Panc1 (cell line): ENCODE measurements at regions of chr16 and their contacts with region 1.

Region 1: DNA sequence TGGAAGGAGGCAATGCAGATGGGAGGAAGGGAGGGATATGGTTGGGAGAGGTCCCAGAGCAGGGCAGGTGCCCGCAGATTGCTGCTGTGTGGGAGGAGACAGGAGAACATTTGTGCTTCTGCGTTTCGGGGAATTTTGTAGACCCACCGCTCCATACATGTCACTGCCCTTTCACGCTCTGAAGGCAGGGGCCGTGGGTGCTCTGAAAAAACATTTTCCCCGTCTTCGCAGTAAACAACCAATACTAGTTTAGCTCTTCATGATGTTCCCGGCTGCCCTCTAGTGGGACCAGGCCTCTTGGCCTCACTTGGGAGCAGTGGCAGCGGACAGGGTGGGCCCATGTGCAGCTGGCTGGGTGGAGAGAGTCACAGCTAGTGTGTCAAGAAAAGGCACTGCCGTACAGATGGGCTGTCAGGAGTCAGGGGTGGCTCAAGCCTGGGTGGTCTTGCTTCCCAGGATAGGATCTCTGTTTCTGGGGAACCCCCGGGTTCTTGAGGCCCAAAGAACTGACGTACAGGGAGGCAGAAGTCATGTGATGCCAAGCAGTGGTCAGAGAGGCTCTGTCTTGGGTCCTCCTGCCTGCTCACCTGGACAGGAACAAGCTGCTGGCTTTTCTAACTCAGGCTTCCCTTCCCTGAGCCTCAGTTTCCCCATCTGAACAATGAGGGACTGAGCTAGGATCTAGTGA is 46.5 kb upstream of the CPNE2 start:
- DNase-seq: peak; percentile 13
- ATAC-seq: peak; percentile 84
- H3K4me3 ChIP-seq: no peak overlapping the region
- H3K27ac ChIP-seq: no peak overlapping the region
- H3K4me1 ChIP-seq: no peaks in the 10 kb centered on the region
- H3K27me3 ChIP-seq: no peaks in the 10 kb centered on the region
- CTCF ChIP-seq: peak; percentile 80

Region 2: DNA sequence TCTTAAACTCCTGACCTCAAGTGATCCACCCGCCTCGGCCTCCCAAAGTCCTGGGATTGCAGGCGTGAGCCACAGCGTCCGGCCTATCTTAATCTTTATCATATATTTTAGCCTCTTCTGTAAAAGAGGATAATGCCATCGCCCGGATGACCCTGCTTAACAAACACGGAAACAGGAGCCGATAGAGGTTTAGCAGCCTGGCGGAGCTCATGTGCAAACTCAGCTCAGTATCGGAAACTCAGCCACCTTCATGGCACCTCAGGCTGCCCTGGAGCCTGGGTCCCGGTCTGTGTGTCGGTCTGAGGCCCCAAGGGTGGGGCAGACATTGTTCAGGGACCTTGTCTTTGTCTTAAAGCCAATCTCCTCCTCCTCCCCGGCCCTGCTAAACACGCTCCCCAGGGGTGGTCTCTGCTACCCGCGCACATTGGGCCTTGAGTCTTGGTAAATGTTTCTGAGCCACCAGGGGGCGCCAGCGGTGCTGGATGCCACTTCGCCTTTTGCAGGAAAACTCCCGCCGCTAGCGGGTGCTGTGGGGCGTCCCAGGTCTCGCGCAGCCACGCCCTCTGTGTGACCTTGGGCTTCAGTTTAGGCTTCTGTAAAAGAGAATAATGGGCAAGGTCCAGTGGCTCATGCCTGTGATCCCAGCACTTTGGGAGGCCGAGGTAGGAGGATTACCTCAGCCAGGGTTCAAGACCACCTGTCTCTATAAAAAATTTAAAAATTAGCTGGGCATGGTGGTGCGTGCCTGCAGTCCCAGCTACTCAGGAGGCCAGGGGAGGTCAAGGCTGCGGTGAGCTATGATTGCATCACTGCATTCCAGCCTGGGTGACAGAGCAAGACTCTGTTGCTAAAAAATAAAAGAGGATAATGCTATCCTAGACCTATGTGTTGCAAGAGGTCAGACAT is 81.3 kb before region 1 on chr16:
- CTCF ChIA-PET with region 1: interaction called, 4 read pairs
- POLR2A ChIA-PET with region 1: no interaction called
- in situ Hi-C with region 1: no loop called
- intact Hi-C with region 1: loop called (anchors 10 kb)
- DNase-seq: no peak
- ATAC-seq: peak; percentile 81
- H3K4me3 ChIP-seq: no peak overlapping the region
- H3K27ac ChIP-seq: no peak overlapping the region
- H3K4me1 ChIP-seq: no peaks in the 10 kb centered on the region
- H3K27me3 ChIP-seq: no peaks in the 10 kb centered on the region
- CTCF ChIP-seq: peak; percentile 95

Region 3: DNA sequence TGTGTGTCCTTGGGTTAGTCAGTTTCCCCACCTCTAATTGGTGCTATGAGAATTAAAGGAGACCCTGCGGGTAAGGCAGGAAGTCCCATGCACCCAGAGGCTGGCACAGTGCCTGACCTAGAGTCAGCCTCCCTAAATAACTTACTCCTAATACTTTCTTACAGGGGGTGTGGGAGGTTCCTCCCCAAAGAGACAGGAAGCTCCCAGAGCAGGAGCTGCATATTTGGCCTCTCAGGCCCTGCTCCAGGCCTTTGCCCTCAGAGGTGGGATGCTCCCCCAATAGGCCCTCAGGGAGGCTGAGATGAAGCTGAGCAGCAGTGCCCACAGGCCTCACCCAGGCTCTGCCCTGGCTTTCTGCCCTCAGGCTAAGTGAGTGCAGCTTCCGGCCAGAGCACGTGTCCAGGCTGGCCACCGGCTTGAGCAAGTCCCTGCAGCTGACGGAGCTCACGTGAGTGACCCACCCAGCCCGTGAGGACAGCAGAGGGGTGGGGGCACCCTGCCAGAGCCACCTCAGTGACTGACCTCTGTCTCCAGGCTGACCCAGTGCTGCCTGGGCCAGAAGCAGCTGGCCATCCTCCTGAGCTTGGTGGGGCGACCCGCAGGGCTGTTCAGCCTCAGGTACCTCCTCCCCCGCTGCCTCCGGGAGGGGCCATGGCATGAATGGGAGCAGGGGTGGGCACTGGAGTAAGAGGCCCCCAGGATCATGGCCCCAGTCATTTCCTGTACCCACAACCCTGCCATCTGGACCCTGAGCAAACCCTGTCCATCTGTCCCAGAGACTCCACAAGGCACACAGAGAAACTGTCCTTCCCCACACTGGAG is 15.5 kb after region 1 on chr16:
- CTCF ChIA-PET with region 1: no interaction called
- POLR2A ChIA-PET with region 1: no interaction called
- in situ Hi-C with region 1: no loop called
- intact Hi-C with region 1: no loop called
- DNase-seq: no peak
- ATAC-seq: peak; percentile 76
- H3K4me3 ChIP-seq: no peak overlapping the region
- H3K27ac ChIP-seq: no peak overlapping the region
- H3K4me1 ChIP-seq: peaks cover 3% of the 10 kb centered on the region; the same call in 1 of the 2 replicates
- H3K27me3 ChIP-seq: no peaks in the 10 kb centered on the region
- CTCF ChIP-seq: no peak

Region 4: GRCh38 chr16:57258910-57259480 is 213.2 kb after region 1 on chr16:
- CTCF ChIA-PET with region 1: interaction called, 10 read pairs
- POLR2A ChIA-PET with region 1: no interaction called
- in situ Hi-C with region 1: no loop called
- intact Hi-C with region 1: no loop called
- DNase-seq: no peak
- ATAC-seq: no peak
- H3K4me3 ChIP-seq: no peak overlapping the region
- H3K27ac ChIP-seq: no peak overlapping the region
- H3K4me1 ChIP-seq: no peaks in the 10 kb centered on the region
- H3K27me3 ChIP-seq: no peaks in the 10 kb centered on the region
- CTCF ChIP-seq: no peak